ENCODE measurements at regions of chr1 and their contacts with region 1.

Region 1: GRCh38 chr1:226121587-226122400 is 59.3 kb downstream of the H3-3A start:
- DNase-seq: peak; percentile 80
- H3K4me3 Mint-ChIP-seq: peak overlapping the region; percentile 75
- H3K27ac Mint-ChIP-seq: peak overlapping the region; percentile 89
- H3K4me1 Mint-ChIP-seq: peaks cover 50% of the 10 kb centered on the region
- H3K27me3 Mint-ChIP-seq: peaks cover 5% of the 10 kb centered on the region

Region 2: DNA sequence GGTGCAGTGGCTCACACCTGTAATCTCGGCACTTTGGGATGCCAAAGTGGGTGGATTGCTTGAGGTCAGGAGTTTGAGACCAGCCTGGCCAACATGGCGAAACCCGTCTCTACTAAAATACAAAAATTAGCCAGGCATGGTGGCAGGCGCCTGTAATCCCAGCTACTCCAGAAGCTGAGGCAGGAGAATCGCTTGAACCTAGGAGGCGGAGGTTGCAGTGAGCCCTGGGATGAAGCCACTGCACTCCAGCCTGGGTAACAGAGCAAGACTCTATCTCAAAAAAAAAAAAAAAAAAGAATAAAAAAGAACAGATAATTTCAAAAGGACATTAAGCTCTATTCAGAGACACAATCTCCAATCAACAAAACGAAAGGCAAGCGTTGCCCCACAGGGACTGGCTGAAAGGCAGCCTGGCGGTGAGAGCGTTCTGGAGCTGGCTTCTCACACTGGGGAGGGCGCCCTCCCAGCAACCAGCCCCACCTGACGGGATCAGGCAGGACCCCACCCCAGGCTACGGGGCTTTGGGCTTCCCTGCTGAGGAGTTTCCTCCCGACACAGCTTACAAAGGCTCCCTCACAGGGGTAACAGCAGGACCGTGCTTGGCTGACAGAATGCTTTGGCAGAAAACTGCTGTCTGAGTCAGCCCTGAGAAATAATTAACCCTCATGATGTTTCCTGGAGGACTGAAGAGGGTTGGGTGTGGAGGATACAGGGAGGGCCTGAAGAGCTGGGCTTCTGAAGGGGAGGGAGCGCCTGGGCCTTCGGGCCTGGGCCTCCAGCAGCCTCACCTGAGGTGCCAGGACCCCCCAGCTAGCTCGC is 375.2 kb before region 1 on chr1:
- CTCF ChIA-PET with region 1: no interaction called
- POLR2A ChIA-PET with region 1: no interaction called
- DNase-seq: no peak
- H3K4me3 Mint-ChIP-seq: no peak overlapping the region
- H3K27ac Mint-ChIP-seq: no peak overlapping the region
- H3K4me1 Mint-ChIP-seq: no peaks in the 10 kb centered on the region
- H3K27me3 Mint-ChIP-seq: no peaks in the 10 kb centered on the region

Region 3: DNA sequence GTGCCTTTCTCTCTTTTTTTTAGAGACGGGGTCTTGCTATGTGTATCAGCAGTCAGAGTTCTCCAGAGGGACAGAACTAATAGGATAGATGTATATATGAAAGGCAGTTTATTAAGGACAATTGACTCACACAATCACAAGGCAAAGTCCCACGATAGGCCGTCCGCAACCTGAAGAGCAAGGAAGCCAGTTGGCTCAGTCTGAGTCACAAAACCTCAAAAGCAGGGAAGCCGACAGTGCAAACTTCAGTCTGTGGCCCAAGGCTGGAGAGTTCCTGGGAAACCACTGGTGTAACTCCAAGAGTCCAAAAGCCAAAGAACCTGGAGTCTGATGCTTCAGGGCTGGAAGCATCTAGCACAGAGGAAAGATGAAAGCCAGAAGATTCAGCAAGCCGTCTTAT is 75.6 kb before region 1 on chr1:
- CTCF ChIA-PET with region 1: no interaction called
- POLR2A ChIA-PET with region 1: no interaction called
- DNase-seq: no peak
- H3K4me3 Mint-ChIP-seq: no peak overlapping the region
- H3K27ac Mint-ChIP-seq: no peak overlapping the region
- H3K4me1 Mint-ChIP-seq: no peaks in the 10 kb centered on the region
- H3K27me3 Mint-ChIP-seq: peaks cover 5% of the 10 kb centered on the region

Region 4: GRCh38 chr1:226100436-226101391 is 21.1 kb before region 1 on chr1:
- CTCF ChIA-PET with region 1: interaction called, 13 read pairs
- POLR2A ChIA-PET with region 1: no interaction called
- DNase-seq: peak; percentile 37
- H3K4me3 Mint-ChIP-seq: peak overlapping the region; percentile 79
- H3K27ac Mint-ChIP-seq: peak overlapping the region; percentile 55
- H3K4me1 Mint-ChIP-seq: peaks cover 15% of the 10 kb centered on the region
- H3K27me3 Mint-ChIP-seq: peaks cover 6% of the 10 kb centered on the region

Region 5: GRCh38 chr1:226109829-226110248 is 12.0 kb before region 1 on chr1:
- CTCF ChIA-PET with region 1: interaction called, 10 read pairs
- POLR2A ChIA-PET with region 1: no interaction called
- DNase-seq: peak; percentile 83
- H3K4me3 Mint-ChIP-seq: peak overlapping the region; percentile 92
- H3K27ac Mint-ChIP-seq: peak overlapping the region; percentile 91
- H3K4me1 Mint-ChIP-seq: peaks cover 20% of the 10 kb centered on the region
- H3K27me3 Mint-ChIP-seq: peaks cover 7% of the 10 kb centered on the region

Region 6: GRCh38 chr1:226166341-226166740 is 44.5 kb after region 1 on chr1:
- CTCF ChIA-PET with region 1: interaction called, 10 read pairs
- POLR2A ChIA-PET with region 1: no interaction called
- DNase-seq: no peak
- H3K4me3 Mint-ChIP-seq: no peak overlapping the region
- H3K27ac Mint-ChIP-seq: no peak overlapping the region
- H3K4me1 Mint-ChIP-seq: no peaks in the 10 kb centered on the region
- H3K27me3 Mint-ChIP-seq: no peaks in the 10 kb centered on the region

Region 7: GRCh38 chr1:226201029-226201593 is 79.3 kb after region 1 on chr1:
- CTCF ChIA-PET with region 1: interaction called, 34 read pairs
- POLR2A ChIA-PET with region 1: no interaction called
- DNase-seq: peak; percentile 14
- H3K4me3 Mint-ChIP-seq: no peak overlapping the region
- H3K27ac Mint-ChIP-seq: no peak overlapping the region
- H3K4me1 Mint-ChIP-seq: peaks cover 3% of the 10 kb centered on the region
- H3K27me3 Mint-ChIP-seq: peaks cover 16% of the 10 kb centered on the region

Region 8: DNA sequence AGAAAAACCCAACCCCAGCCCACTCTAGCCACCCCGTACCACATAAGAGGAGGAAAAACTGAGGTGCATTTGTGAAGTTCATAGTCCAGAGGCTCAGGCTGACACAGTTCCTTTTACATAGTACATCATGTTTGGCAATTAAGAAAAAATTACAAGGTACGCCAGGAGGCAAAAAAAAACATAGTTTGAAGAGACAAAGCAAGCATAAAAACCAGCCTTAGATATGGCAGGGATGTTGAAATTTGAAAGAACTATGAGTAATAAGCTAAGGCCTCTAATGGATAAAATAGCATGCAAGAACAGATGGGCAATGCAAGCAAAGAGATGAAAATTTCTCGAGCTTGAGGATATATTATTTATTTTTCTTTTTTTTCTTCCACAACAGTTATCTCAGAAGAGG is 133.6 kb after region 1 on chr1:
- CTCF ChIA-PET with region 1: no interaction called
- POLR2A ChIA-PET with region 1: no interaction called
- DNase-seq: no peak
- H3K4me3 Mint-ChIP-seq: no peak overlapping the region
- H3K27ac Mint-ChIP-seq: no peak overlapping the region
- H3K4me1 Mint-ChIP-seq: no peaks in the 10 kb centered on the region
- H3K27me3 Mint-ChIP-seq: no peaks in the 10 kb centered on the region

Region 9: GRCh38 chr1:226373376-226373775 is 251.6 kb after region 1 on chr1:
- CTCF ChIA-PET with region 1: no interaction called
- POLR2A ChIA-PET with region 1: no interaction called
- DNase-seq: no peak
- H3K4me3 Mint-ChIP-seq: no peak overlapping the region
- H3K27ac Mint-ChIP-seq: no peak overlapping the region
- H3K4me1 Mint-ChIP-seq: no peaks in the 10 kb centered on the region
- H3K27me3 Mint-ChIP-seq: no peaks in the 10 kb centered on the region

Measured in activated CD4-positive, alpha-beta T cell treated with anti-CD3 and anti-CD28 coated beads, Interleukin-2, amount 10 ng/mL, durations not matched to agents 7 days and 5 days (primary cell).